ENCODE measurements at regions of chr2 and their contacts with region 1.

Region 1: DNA sequence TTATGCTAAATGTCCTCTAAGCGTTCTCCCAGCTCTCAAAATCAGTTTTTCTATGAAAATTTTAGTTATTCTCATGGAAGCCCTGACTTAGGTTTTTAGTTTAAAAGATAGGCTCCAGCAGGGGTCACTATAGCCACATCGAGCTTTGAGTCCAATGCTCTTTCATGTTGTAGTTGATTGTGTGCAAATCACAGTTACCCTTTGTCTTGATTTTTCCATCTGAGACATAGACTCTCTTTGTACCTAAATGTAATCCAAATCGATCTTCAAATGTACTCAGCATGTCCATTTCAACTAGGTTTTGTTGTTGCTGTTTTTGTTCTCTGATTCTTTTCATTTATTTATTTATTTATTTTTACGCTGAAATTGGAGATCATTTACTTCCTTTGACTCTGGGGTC is 26.4 kb upstream of the MSTN start:
- DNase-seq: no peak
- ATAC-seq: peak; percentile 60
- H3K4me3 Mint-ChIP-seq: no peak overlapping the region
- H3K27ac Mint-ChIP-seq: no peak overlapping the region
- H3K4me1 Mint-ChIP-seq: no peaks in the 10 kb centered on the region
- H3K27me3 Mint-ChIP-seq: no peaks in the 10 kb centered on the region
- CTCF ChIP-seq: no peak

Region 2: GRCh38 chr2:189302274-189302948 is 786.5 kb before region 1 on chr2:
- CTCF ChIA-PET with region 1: no interaction called
- POLR2A ChIA-PET with region 1: no interaction called
- intact Hi-C with region 1: no loop called
- DNase-seq: no peak
- ATAC-seq: no peak
- H3K4me3 Mint-ChIP-seq: no peak overlapping the region
- H3K27ac Mint-ChIP-seq: no peak overlapping the region
- H3K4me1 Mint-ChIP-seq: no peaks in the 10 kb centered on the region
- H3K27me3 Mint-ChIP-seq: no peaks in the 10 kb centered on the region
- CTCF ChIP-seq: no peak

Region 3: DNA sequence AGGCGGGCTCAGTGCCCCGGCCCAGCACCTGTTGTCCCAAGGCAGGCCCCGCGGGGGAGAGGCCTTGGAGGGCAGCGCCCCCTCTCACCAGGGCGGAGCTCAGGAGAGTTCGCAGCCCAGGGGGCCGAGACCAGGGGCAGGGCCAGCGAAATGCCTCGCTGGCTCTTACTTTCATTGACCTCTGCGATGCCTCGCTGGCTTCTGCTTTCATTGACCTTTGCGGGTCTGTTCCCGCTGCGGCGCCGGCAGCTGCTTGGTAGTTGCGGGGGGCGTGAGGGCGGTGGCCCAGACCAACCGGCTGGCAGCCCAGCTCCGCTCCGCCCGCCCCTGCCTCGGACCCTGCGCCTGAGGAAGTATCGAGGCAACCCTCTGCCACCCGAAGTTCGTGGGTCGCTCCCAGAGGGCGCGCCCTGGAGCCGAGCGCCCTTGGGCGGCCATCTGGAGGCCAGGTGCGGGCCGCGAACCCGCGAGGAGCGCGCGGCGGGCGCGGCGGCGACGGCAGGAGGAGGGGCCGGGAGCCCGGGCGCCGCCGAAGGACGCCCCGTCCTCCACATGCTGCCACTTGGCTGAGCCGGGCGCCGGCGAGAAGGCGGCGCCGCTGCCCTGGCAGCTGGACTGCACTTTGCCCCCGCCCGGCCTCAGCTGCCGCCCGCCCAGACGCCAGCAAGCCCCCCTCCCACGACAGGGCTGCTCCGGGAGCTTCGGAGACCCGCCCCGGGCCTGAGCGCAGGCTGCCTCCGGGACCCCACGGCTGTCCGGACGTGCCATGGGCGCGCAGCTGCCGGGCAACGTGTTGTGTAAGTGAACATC is 91.6 kb after region 1 on chr2:
- CTCF ChIA-PET with region 1: interaction called, 8 read pairs
- POLR2A ChIA-PET with region 1: no interaction called
- intact Hi-C with region 1: loop called (anchors 1 kb)
- DNase-seq: peak; percentile 54
- ATAC-seq: peak; percentile 86
- H3K4me3 Mint-ChIP-seq: peak overlapping the region; percentile 82
- H3K27ac Mint-ChIP-seq: no peak overlapping the region
- H3K4me1 Mint-ChIP-seq: peaks cover 20% of the 10 kb centered on the region
- H3K27me3 Mint-ChIP-seq: no peaks in the 10 kb centered on the region
- CTCF ChIP-seq: no peak

Region 4: GRCh38 chr2:190313880-190314279 is 225.0 kb after region 1 on chr2:
- CTCF ChIA-PET with region 1: interaction called, 5 read pairs
- POLR2A ChIA-PET with region 1: no interaction called
- intact Hi-C with region 1: loop called (anchors 1 kb)
- DNase-seq: no peak
- ATAC-seq: no peak
- H3K4me3 Mint-ChIP-seq: no peak overlapping the region
- H3K27ac Mint-ChIP-seq: no peak overlapping the region
- H3K4me1 Mint-ChIP-seq: peaks cover 29% of the 10 kb centered on the region
- H3K27me3 Mint-ChIP-seq: no peaks in the 10 kb centered on the region
- CTCF ChIP-seq: no peak

Region 5: DNA sequence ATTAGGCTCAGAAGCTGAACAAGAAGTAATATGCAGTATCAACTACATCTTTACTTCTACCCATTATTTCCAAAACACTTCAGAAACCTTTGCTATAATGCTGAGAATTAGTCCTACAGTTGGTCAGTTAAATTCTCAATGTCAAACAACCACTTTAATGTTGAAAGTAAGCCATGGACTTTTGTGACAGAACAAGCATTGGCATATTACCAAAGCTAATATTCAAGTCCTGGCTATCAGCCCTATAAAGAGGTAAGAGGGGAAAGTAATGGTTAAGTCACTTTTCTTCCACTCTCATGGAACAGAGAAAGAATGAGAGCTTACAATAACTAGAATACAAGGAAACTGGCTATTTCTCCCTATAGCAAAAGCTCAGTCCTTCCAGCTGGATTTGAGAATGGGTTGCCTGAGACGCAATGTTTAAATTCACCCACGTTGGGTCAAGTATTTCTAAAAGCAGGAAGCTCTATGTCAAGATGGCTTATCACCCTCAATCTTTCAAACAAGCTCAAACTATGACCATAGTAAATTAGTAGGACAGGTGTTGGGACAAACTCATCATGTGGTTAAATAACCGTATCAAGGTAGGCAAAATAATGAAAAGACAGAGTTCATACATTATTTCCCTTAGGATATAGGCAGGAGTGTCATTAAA is 287.8 kb after region 1 on chr2:
- CTCF ChIA-PET with region 1: interaction called, 13 read pairs
- POLR2A ChIA-PET with region 1: no interaction called
- intact Hi-C with region 1: loop called (anchors 1 kb)
- DNase-seq: no peak
- ATAC-seq: no peak
- H3K4me3 Mint-ChIP-seq: no peak overlapping the region
- H3K27ac Mint-ChIP-seq: no peak overlapping the region
- H3K4me1 Mint-ChIP-seq: peaks cover 3% of the 10 kb centered on the region
- H3K27me3 Mint-ChIP-seq: no peaks in the 10 kb centered on the region
- CTCF ChIP-seq: no peak

Region 6: GRCh38 chr2:190679813-190680591 is 591.1 kb after region 1 on chr2:
- CTCF ChIA-PET with region 1: interaction called, 11 read pairs
- POLR2A ChIA-PET with region 1: no interaction called
- intact Hi-C with region 1: loop called (anchors 1 kb)
- DNase-seq: peak; percentile 49
- ATAC-seq: peak; percentile 76
- H3K4me3 Mint-ChIP-seq: peak overlapping the region; percentile 72
- H3K27ac Mint-ChIP-seq: peak overlapping the region; percentile 88
- H3K4me1 Mint-ChIP-seq: peaks cover 38% of the 10 kb centered on the region
- H3K27me3 Mint-ChIP-seq: no peaks in the 10 kb centered on the region
- CTCF ChIP-seq: peak; percentile 35

Region 7: DNA sequence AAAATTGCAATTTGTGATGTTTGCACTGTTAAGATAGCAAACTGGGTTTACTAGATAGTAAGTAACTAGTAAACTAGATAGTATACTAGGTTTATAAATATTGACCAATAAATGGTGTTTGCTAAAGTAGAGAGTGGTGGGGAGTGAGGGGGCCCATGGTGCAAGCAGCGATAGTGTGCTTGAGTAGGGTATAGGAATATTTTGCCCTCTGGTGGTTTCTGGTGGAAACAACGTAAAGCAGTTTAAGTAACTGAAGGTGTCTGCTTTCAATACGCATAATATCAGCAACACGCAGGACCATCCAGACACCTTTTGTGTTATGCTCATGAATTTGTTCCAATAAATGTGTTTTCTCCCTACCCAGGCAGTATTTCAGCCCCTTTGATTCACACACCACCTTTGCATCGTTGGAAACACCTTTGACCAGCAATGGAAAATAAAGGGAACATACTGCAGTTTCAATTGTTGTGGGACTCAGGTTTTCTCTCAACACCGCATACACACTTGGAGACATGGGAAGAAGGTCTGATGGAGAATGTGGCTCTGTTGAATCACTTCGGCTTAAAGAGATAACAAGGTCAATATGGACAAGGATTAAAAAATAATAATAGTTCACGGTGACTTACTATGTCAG is 941.7 kb after region 1 on chr2:
- CTCF ChIA-PET with region 1: no interaction called
- POLR2A ChIA-PET with region 1: no interaction called
- intact Hi-C with region 1: loop called (anchors 1 kb)
- DNase-seq: no peak
- ATAC-seq: peak; percentile 88
- H3K4me3 Mint-ChIP-seq: no peak overlapping the region
- H3K27ac Mint-ChIP-seq: no peak overlapping the region
- H3K4me1 Mint-ChIP-seq: peaks cover 6% of the 10 kb centered on the region
- H3K27me3 Mint-ChIP-seq: no peaks in the 10 kb centered on the region
- CTCF ChIP-seq: no peak